ENCODE measurements at regions of chr6 and their contacts with region 1.

Region 1: DNA sequence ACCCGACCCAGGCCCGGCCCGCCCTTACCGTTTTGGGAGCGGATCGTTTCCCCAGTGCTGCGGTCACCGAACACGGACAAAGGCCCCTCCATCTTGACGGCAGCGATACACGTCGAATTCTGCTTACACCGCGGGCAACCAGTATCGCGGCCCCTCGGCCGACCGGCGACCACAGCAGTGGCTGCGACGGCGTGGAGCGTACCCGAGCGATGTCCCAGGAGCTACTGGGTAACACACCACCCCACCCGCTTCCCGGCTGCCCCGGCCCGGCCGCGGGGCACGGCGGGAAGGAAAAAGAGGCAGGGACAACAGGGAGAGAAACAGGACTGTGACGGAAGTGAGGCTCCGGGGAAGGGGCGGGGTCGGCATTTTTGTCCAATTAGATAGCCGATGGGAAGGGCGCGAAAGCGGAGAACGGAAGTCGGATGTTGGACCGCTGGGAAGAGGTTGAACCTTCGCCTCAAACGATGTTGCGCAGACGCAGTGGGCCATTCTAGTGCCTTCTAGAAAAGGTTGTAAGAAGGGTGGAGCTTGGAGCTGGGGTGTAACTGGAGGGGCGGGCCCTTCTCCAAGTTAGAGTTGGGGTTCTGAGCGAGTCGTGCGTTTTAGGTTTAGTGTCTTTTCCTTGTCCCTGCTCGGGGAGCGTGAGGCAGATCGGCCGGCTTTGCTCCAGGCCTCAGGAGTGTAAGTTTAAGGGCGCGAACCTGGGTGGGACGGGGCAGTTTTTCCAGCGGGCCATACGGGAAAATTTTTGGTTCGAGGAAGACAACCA is at the start of gene TCP1:
- DNase-seq: peak; percentile 85 to 98
- ATAC-seq: peak; percentile 90 to 91
- H3K4me3 ChIP-seq: peak within 1 kb of the TSS; percentile 92
- H3K27ac ChIP-seq: peak within 1 kb of the TSS; percentile 95 to 99
- H3K4me1 ChIP-seq: peaks cover 42% of the 10 kb centered on the region
- CTCF ChIP-seq: no peak
- EP300 ChIP-seq: no peak
- POLR2A ChIP-seq: peak; percentile 95
- RAD21 ChIP-seq: no peak
- polyA plus RNA-seq, gene TCP1: 170 and 215 TPM in 2 replicates

Region 2: GRCh38 chr6:159726918-159727716 is 62.4 kb before region 1 on chr6 and contains the start of gene WTAP:
- CTCF ChIA-PET with region 1: no interaction called
- POLR2A ChIA-PET with region 1: interaction called, 15 read pairs
- DNase-seq: peak; percentile 74 to 97
- ATAC-seq: peak; percentile 92 to 94
- H3K4me3 ChIP-seq: peak within 1 kb of the TSS; percentile 79
- H3K27ac ChIP-seq: peak within 1 kb of the TSS; percentile 98 to 99
- H3K4me1 ChIP-seq: peaks cover 22% of the 10 kb centered on the region; the same call in 2 of the 3 replicates
- CTCF ChIP-seq: no peak
- EP300 ChIP-seq: no peak
- POLR2A ChIP-seq: peak; percentile 72
- RAD21 ChIP-seq: no peak
- polyA plus RNA-seq, gene WTAP: 42.4 and 46.1 TPM in 2 replicates

Region 3: DNA sequence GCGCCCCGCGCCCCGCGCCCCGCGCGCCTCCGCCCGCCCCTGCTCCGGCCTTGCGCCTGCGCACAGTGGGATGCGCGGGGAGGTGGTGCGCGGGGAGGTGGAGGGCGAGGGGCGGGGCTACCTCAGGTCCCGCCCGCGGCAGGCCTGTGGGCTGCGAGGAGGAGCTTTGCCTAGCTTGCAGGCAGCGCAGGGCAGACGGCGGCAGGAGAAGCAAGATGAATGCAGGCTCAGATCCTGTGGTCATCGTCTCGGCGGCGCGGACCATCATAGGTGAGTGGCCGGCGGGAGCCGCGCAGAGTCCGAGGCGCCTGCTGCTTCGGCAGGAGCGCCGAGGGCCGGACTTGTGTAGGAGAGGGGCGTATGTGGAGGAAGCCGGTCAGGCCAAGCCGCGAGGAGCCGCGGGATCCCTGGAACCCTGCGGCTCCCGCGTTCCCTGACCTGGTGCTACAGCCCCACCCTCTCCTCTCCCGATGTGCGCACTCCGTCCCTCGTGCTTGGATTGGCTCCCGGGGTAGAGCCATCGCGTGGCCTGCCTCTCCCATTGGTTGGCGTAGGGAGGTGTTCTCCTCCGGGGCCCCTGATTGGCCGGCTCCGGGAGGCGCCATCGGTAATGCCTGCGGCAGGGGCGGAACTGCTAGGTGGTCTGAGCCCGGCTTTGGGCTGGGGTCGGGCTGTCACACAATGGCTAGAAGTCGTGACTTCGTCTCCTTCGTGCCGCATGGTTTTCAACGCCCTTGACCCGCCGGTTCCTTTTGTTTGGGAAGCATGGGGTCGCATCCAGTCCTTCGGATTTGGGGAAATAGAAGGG is 27.5 kb before region 1 on chr6 and contains the start of gene ACAT2:
- CTCF ChIA-PET with region 1: no interaction called
- POLR2A ChIA-PET with region 1: interaction called, 13 read pairs
- DNase-seq: peak; percentile 92 to 93
- ATAC-seq: peak; percentile 97 to 98
- H3K4me3 ChIP-seq: peak within 1 kb of the TSS; percentile 68
- H3K27ac ChIP-seq: peak within 1 kb of the TSS; percentile 87 to 94
- H3K4me1 ChIP-seq: peaks cover 14% of the 10 kb centered on the region
- CTCF ChIP-seq: no peak
- EP300 ChIP-seq: no peak
- POLR2A ChIP-seq: peak; percentile 70
- RAD21 ChIP-seq: no peak
- polyA plus RNA-seq, gene ACAT2: 37.3 and 45.5 TPM in 2 replicates

Measured in A549 (cell line).